WTC11 (cell line): ENCODE measurements at regions of chr3 and their contacts with region 1.

Region 1: DNA sequence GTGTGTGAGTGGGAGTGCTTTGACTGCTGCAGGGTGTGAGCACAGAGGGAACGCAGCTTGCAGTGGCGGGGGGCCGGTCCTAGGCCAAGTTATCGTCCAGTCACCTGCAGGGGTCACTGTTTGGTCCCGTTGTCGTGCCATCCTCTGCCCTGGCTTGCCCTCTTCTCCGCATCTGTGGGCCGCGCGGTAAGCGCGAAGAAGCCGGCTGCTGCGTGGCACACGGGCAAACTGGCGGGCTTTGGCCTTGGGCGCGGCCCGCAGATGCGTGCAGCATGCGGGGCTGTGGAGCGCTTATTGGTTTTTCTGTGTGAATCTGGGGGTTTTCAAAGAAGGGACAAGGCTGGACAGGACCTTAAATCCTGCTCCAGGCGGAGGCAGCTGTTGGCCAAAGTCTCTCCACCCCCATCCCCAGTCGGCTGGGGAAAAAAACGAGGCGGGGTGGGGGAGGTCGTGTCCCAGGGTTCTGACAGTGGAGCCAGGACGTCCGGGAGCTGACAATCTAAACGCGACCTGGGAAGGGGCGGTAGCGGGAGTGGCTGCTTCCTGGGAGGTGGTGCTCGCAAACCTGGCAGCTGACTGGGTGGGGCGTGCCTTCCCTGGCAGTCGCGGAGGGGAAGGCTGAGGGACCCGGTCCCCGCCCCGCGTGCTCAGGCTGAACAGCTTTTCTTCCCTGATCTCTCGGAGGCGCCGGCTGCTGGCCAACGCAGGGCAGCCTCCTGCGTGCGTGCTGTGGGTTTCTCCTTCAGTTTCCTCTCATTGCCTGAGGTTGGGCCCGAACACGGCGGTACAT is 39.7 kb upstream of the VEPH1 start:
- DNase-seq: peak; percentile 72
- ATAC-seq: peak; percentile 92
- H3K4me3 Mint-ChIP-seq: peak overlapping the region; percentile 78
- H3K27ac Mint-ChIP-seq: no peak overlapping the region
- H3K4me1 Mint-ChIP-seq: 0 out of 2 replicates have a peak, but pooled peaks cover 3% of the 10 kb centered on the region
- H3K27me3 Mint-ChIP-seq: peaks cover 24% of the 10 kb centered on the region
- CTCF ChIP-seq: 0 out of 2 replicates have a peak, but pooled peaks have one; percentile 23

Region 2: GRCh38 chr3:157311633-157312375 is 231.1 kb before region 1 on chr3:
- CTCF ChIA-PET with region 1: no interaction called
- POLR2A ChIA-PET with region 1: no interaction called
- DNase-seq: no peak
- ATAC-seq: no peak
- H3K4me3 Mint-ChIP-seq: no peak overlapping the region
- H3K27ac Mint-ChIP-seq: no peak overlapping the region
- H3K4me1 Mint-ChIP-seq: no peaks in the 10 kb centered on the region
- H3K27me3 Mint-ChIP-seq: no peaks in the 10 kb centered on the region
- CTCF ChIP-seq: no peak

Region 3: DNA sequence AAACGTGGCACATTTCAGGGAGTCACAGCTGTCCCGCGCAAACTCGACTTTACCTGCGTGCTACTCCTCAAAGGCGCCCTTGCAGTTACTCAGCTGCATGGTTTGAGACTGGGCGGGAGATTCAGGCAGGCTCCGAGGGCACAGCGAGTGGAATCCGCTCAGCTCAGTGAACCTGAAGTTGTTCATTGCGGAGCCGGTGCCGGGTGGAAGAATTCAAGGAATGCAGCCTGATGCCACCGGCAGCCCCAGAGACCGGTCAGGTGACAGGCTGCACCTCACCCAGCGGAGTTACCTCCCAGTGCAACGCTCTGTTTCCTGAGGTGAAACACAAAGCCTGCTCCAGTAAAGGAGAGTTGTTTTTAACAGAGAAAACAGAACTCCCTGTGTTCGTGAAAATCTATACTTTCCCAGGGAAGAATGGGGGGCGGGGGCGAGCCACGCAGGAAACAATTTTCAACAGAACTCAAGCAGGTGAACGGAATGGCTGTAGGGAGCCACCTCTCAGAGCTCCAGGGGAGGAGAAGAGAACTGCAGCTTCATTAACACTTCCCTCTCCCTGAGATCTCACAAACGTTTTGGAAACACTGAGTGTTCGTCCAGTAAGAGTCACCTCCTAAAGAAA is 43.5 kb before region 1 on chr3:
- CTCF ChIA-PET with region 1: interaction called, 17 read pairs
- POLR2A ChIA-PET with region 1: no interaction called
- DNase-seq: peak; percentile 91
- ATAC-seq: peak; percentile 90
- H3K4me3 Mint-ChIP-seq: peak overlapping the region; percentile 78
- H3K27ac Mint-ChIP-seq: peak overlapping the region; percentile 98
- H3K4me1 Mint-ChIP-seq: peaks cover 64% of the 10 kb centered on the region
- H3K27me3 Mint-ChIP-seq: no peaks in the 10 kb centered on the region; the same call in 1 of the 2 replicates
- CTCF ChIP-seq: no peak